ENCODE measurements at regions of chr2 and their contacts with region 1.

Region 1: GRCh38 chr2:27095745-27096651 is 9.4 kb downstream of the KHK start:
- DNase-seq: peak; percentile 65 to 77 (median 71)
- ATAC-seq: peak; percentile 62 to 89 (median 86)
- H3K4me3 ChIP-seq: peak overlapping the region in 9 of 12 donors; percentile 14 to 50 (median 43)
- H3K27ac ChIP-seq: peak overlapping the region in 6 of 12 donors; percentile 7 to 68 (median 56)
- H3K4me1 ChIP-seq: peaks cover 0 to 20% (median 8%) of the 10 kb centered on the region in 12 donors
- H3K27me3 ChIP-seq: no peaks in the 10 kb centered on the region
- CTCF ChIP-seq: peak in 1 of 12 donors; percentile 14
- POLR2A ChIP-seq: no peak

Region 2: DNA sequence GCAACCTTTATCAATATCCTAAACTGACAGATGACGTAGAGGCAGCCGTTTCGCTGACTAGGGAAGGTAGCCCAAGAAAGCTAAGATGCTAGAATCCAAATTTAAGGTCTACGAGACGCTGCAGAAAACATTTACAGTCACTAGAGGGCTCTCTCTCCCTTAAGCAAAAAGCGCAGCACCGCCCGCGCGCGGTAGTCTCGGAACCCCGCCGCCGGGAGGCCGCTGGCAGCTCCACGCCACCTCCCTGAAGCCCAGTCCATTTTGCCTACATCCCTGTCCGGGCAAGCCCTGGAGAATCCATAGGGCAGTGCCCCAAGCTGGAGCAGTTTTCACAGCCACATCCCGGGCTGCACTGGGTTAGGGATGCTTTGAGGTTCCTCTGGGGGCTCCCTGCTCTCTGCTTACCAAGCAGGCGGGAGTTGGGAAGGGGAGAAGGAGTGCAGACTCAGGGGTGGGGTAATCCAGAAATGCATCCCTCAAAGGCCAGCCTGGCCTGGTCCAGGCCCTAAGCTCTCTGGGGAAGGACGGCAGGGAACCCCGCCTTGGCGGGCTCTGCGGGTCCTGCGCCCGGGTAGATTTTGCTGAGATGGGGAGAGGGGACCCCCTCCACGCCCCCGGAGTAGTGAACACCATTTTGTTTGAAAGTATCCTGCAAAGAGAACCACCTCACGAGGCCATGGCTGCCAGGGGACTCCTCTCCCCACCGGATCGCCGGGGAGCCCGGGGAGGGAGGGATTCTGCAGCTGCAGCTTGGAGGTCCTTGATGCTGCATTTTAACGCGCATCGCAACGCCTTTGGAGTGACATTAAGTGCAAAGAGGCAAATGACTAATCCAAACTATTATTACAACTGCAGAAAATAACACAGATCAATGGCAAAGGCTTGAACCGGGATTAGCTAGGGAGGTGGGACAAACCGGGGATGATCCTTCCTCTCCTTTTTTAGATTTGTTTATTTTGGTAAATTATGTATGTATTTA is 249.4 kb before region 1 on chr2:
- intact Hi-C with region 1: loop called in 1 of 10 experiments (anchors 10 kb)
- DNase-seq: peak; percentile 57 to 82 (median 64)
- ATAC-seq: peak in 3 of 4 donors; percentile 78 to 89 (median 88)
- H3K4me3 ChIP-seq: peak overlapping the region in 1 of 12 donors; percentile 16
- H3K27ac ChIP-seq: no peak overlapping the region
- H3K4me1 ChIP-seq: peaks cover 9 to 39% (median 30%) of the 10 kb centered on the region in 12 donors
- H3K27me3 ChIP-seq: peaks cover 41 to 93% (median 63%) of the 10 kb centered on the region in 9 donors
- CTCF ChIP-seq: peak; percentile 68 to 84 (median 77)
- POLR2A ChIP-seq: no peak

Region 3: DNA sequence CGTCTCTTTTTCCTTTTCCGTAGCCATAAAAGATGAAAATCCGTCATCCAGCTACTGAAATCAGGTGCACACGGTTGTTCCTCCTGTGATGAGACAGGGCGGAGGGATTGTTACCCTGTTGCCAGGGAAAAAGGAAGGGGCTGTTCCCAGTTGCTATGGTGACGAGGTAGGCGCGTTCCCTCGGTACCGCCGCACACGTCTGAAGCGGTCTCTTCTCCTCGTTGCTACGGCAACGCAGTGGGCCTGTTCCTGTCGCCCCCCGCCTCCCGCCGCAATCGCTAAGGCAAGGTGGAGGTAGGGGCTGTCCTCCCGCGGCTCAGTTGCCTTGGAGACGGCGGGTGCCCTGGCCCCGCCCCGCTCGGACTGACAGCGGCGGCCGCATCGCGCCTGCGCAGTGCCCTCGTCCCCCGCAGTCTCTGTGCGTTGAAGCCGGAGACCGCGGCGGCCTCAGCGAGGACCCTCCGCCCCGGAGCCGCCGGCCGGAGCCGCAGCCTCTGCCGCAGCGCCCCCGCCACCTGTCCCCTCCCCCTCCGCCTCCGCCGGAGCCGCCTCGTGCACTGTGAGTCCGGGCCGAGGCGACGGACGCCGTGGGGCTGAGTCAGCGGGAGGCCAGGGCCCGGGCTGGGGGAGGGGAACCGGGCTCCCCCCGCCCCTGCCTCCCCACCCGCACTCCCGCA is 125.6 kb before region 1 on chr2 and contains the start of gene MAPRE3:
- intact Hi-C with region 1: no loop called
- DNase-seq: peak; percentile 79 to 93 (median 84)
- ATAC-seq: peak; percentile 76 to 97 (median 93)
- H3K4me3 ChIP-seq: peak within 1 kb of the TSS; percentile 64 to 96 (median 84)
- H3K27ac ChIP-seq: peak within 1 kb of the TSS in 11 of 12 donors; percentile 58 to 86 (median 72)
- H3K4me1 ChIP-seq: peaks cover 0 to 33% (median 22%) of the 10 kb centered on the region in 12 donors
- H3K27me3 ChIP-seq: no peaks in the 10 kb centered on the region
- CTCF ChIP-seq: no peak
- POLR2A ChIP-seq: peak in 1 of 2 donors; percentile 34
- total RNA-seq, gene MAPRE3: 27.4 to 55.2 (median 42.3) TPM

Region 4: GRCh38 chr2:27191053-27191829 is 95.2 kb after region 1 on chr2:
- intact Hi-C with region 1: loop called (anchors 1 to 5 kb)
- DNase-seq: peak in 1 of 5 donors; percentile 29
- ATAC-seq: peak in 3 of 4 donors; percentile 65 to 76 (median 73)
- H3K4me3 ChIP-seq: no peak overlapping the region
- H3K27ac ChIP-seq: no peak overlapping the region
- H3K4me1 ChIP-seq: no peaks in the 10 kb centered on the region
- H3K27me3 ChIP-seq: no peaks in the 10 kb centered on the region
- CTCF ChIP-seq: peak; percentile 46 to 70 (median 56)
- POLR2A ChIP-seq: no peak

Region 5: GRCh38 chr2:27271631-27272340 is 175.8 kb after region 1 on chr2:
- intact Hi-C with region 1: loop called in 3 of 10 experiments (anchors 2 to 5 kb)
- DNase-seq: peak in 3 of 5 donors; percentile 64 to 69 (median 66)
- ATAC-seq: peak; percentile 87 to 95 (median 93)
- H3K4me3 ChIP-seq: no peak overlapping the region
- H3K27ac ChIP-seq: peak overlapping the region; percentile 62 to 91 (median 77)
- H3K4me1 ChIP-seq: peaks cover 0 to 38% (median 5%) of the 10 kb centered on the region in 12 donors
- H3K27me3 ChIP-seq: peaks cover 0 to 11% (median 0%) of the 10 kb centered on the region in 9 donors
- CTCF ChIP-seq: no peak
- POLR2A ChIP-seq: peak in 1 of 2 donors; percentile 32

Region 6: DNA sequence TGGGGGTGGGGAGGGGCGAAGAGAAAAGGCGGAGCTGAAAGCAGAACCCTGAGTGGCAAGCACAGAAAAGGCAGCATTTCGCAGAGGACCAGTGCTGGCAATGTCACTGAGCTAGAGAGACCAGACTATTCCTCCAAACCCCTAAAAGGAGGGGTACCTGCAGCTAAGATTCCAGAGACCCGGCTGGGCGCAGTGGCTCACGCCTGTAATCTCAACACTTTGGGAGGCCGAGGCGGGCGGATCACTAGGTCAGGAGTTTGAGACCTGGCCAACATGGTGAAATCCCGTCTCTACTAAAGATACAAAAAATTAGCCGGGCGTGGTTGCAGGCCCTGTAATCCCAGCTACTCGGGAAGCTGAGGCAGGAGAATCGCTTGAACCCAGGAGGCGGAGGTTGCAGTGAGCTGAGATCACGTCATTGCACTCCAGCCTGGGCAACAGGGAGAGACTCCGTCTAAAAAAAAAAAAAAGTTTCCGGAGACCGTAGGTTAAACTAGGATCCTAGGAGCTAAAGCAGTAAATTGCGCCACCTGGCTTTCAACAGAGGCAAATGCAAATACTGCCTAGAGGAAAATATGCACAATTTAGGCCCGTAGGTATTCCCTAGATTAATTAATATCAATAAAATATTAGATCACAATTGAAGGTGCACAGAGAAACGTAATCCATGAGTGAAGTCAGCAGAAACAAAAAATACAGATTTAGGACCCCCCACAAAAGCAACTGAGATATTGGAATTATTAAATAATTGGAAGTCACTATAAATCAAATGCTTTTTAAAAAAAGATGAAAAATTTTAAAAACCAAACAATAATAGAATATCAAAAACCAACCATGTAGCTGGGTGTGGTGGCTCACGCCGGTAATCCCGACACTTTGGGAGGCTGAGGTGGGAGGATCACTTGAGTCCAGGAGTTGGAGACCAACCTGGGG is 207.4 kb after region 1 on chr2:
- intact Hi-C with region 1: loop called in 3 of 10 experiments (anchors 1 to 10 kb)
- DNase-seq: peak in 3 of 5 donors; percentile 51 to 68 (median 63)
- ATAC-seq: peak; percentile 45 to 73 (median 60)
- H3K4me3 ChIP-seq: peak overlapping the region in 11 of 12 donors; percentile 4 to 52 (median 36)
- H3K27ac ChIP-seq: peak overlapping the region in 9 of 12 donors; percentile 27 to 66 (median 43)
- H3K4me1 ChIP-seq: peaks cover 0 to 30% (median 14%) of the 10 kb centered on the region in 12 donors
- H3K27me3 ChIP-seq: peaks cover 0 to 39% (median 23%) of the 10 kb centered on the region in 9 donors
- CTCF ChIP-seq: peak; percentile 75 to 92 (median 89)
- POLR2A ChIP-seq: no peak